Adrenal gland (tissue), 19 donors: ENCODE measurements at regions of chr17 and their contacts with region 1.

Region 1: DNA sequence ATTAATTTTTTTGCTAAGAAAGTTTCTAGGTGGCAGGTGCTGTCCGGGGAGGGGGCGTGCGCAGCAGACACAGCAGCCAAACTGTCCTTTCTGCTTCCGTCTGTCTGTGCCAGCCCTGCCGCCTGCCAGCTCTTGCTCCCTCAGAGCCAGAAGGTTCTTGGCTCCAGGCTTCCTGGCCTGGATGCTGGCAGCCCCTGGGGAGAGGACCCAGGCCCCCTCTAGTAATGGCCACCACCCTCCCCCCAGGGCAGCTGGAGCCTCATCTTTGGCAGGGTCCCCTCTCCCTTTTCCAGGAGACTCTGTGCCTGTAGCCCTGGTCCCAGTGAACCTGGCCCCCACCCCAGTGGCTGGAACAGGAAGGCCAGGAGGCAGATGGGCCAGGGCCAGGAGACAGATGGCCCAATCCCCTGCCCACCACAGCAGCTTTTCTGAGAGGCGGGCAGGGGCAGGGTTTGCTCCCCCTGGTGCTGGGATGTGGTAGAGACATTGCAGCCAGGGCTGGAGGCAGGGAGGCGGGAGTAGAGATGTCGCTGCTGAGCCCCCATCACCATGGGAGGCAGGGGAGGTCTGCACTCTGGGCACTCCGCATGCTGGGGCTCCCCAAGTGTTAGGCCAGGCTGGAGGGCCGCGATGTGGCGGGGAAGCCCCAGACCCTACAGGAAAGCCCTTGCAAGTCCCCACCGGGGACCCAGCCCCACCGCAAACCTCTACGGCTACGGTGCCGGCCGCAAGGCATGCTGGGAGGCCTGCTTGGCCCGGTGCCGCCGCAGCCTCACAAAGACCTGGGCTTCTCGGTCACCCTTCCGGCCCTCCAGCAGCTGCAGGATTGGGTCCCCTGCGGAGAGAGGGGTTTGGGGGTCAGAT is 16.7 kb downstream of the UNC13D start:
- DNase-seq: peak in 6 of 7 donors; percentile 65 to 88 (median 74)
- H3K4me3 ChIP-seq: peak overlapping the region in 1 of 4 donors; percentile 35
- H3K27ac ChIP-seq: peak overlapping the region in 4 of 5 donors; percentile 45 to 84 (median 64)
- H3K4me1 ChIP-seq: peaks cover 10 to 17% of the 10 kb centered on the region in 2 donors
- H3K27me3 ChIP-seq: no peaks in the 10 kb centered on the region
- CTCF ChIP-seq: peak; percentile 61 to 83 (median 67)
- POLR2A ChIP-seq: no peak

Region 2: DNA sequence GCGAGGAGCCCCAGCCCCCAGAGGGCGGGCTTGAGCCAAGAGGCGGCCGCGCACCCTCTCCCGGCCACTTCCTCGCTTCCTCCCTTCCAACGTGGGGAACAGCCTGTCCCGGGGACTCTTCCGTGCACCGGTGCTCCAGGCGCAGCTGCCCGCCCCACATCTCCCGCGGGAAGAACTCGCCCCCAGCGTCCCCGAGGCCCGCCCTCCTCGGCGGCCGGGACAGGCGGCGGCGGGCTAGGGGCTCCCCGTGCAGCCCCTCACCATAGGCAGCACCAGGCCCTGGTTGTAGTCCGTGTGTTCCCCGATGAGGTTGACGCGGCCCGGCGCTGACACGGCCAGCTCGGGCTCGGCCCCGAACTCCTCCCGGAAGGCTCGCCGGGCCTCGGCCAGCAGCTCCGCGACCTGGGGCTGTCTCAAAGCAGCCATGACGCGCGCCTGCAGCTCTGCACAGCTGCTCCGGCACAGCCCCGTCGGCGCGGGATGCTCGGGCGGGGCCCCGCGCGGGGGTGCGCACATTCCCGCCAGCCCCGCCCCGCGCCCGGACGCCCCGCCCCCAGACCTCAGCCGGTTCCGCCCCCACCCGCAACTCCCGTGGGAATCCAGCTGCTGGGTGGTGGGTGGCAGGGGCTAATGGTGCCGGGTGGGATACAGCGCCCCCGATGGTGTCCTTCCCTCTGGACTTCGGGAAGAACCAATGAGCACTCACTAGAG is 62.6 kb before region 1 on chr17 and contains the start of gene GALK1:
- intact Hi-C with region 1: loop called in 1 of 2 experiments (anchors 10 kb)
- DNase-seq: peak; percentile 67 to 81 (median 75)
- H3K4me3 ChIP-seq: peak within 1 kb of the TSS; percentile 16 to 57 (median 50)
- H3K27ac ChIP-seq: peak within 1 kb of the TSS in 4 of 5 donors; percentile 40 to 91 (median 76)
- H3K4me1 ChIP-seq: peaks cover 2 to 13% of the 10 kb centered on the region in 2 donors
- H3K27me3 ChIP-seq: no peaks in the 10 kb centered on the region
- CTCF ChIP-seq: peak in 5 of 6 experiments; percentile 18 to 58 (median 49)
- POLR2A ChIP-seq: peak; percentile 38 to 55
- total RNA-seq, gene GALK1: 13.9 to 47.3 (median 24.7) TPM

Region 3: DNA sequence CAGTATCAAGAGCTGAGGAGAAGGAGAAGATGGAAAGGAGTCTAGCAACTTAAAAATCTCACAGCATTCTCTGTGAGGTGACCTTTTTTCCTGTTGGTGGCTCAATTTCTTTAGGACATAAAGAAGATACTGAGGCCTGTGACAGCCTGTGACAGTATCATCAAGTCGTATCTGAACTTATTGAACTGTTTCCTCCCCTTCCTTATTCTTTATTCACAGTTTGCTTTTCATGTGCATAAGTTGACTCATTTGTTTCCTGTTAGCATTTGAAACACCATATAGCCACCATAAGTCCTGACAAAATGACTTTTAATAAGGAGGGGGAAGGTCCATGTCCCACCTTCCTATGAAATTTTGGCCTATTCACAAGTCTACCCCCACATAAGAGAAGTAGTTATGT is 34.0 kb before region 1 on chr17:
- intact Hi-C with region 1: loop called in 1 of 2 experiments (anchors 5 kb)
- DNase-seq: no peak
- H3K4me3 ChIP-seq: no peak overlapping the region
- H3K27ac ChIP-seq: no peak overlapping the region
- H3K4me1 ChIP-seq: no peaks in the 10 kb centered on the region
- H3K27me3 ChIP-seq: no peaks in the 10 kb centered on the region
- CTCF ChIP-seq: no peak
- POLR2A ChIP-seq: no peak